Ascending aorta (tissue), 2 donors: ENCODE measurements at regions of chr9 and their contacts with region 1.

Region 1: GRCh38 chr9:94030318-94031179 is 53.7 kb upstream of the PTPDC1 start:
- DNase-seq: peak; percentile 37 to 92
- H3K4me3 ChIP-seq: peak overlapping the region; percentile 94 to 95
- H3K27ac ChIP-seq: peak overlapping the region; percentile 79 to 82
- H3K4me1 ChIP-seq: peaks cover 0 to 8% of the 10 kb centered on the region in 2 donors
- H3K27me3 ChIP-seq: no peaks in the 10 kb centered on the region
- CTCF ChIP-seq: no peak

Region 2: GRCh38 chr9:93874242-93874641 is 156.3 kb before region 1 on chr9:
- intact Hi-C with region 1: no loop called
- DNase-seq: no peak
- H3K4me3 ChIP-seq: no peak overlapping the region
- H3K27ac ChIP-seq: no peak overlapping the region
- H3K4me1 ChIP-seq: no peaks in the 10 kb centered on the region
- H3K27me3 ChIP-seq: no peaks in the 10 kb centered on the region
- CTCF ChIP-seq: no peak

Region 3: DNA sequence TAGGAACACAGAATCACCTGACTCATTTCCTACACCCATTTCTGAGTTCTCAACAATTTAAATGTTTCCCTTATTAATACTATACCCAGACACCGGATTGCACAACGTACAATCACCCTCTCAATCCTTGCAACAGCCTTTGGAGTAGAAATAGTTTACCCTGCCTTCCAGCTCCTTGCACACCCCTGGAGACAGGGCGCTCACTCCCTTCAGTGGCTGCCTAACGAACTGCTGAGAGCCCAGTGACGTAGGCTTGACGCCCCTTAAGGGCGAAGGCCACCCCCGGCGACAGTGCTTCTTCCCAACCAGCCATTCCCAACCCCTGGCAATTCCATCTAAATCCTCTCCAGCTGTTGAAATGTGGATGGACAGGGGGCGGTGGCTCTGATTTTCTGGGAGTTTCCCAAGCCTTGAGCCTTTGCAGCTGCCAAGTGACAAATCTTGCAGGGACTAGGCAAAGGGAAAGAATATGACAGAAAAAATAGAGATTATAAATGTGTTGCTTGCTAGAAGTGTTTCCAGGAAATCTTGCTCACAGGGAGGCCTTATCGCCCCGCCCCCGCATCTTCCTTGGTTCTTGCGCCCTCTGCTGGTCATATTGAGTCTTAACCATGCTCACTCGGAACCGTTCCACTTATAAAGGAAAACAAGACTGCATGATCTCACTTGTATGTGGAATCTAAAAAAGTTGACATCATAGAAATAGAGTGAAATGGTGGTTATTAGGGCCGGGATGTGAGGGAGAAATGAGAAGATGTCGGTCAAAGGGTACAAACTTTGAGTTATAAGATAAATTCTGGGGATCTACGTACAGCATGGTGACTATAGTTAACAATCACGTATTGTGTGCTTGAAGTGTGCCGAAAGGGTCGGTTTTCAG is 67.7 kb before region 1 on chr9:
- intact Hi-C with region 1: loop called (anchors 2 kb)
- DNase-seq: peak in 1 of 2 donors; percentile 92
- H3K4me3 ChIP-seq: peak overlapping the region in 1 of 2 donors; percentile 22
- H3K27ac ChIP-seq: no peak overlapping the region
- H3K4me1 ChIP-seq: peaks cover 4 to 16% of the 10 kb centered on the region in 2 donors
- H3K27me3 ChIP-seq: peaks cover 32% of the 10 kb centered on the region
- CTCF ChIP-seq: peak; percentile 67 to 83 (median 73)

Region 4: GRCh38 chr9:94056442-94056974 is 26.0 kb after region 1 on chr9:
- intact Hi-C with region 1: loop called (anchors 2 kb)
- DNase-seq: no peak
- H3K4me3 ChIP-seq: peak overlapping the region in 1 of 2 donors; percentile 7
- H3K27ac ChIP-seq: peak overlapping the region; percentile 59 to 61
- H3K4me1 ChIP-seq: peaks cover 0 to 6% of the 10 kb centered on the region in 2 donors
- H3K27me3 ChIP-seq: no peaks in the 10 kb centered on the region
- CTCF ChIP-seq: no peak

Region 5: GRCh38 chr9:94134629-94135028 is 104.1 kb after region 1 on chr9:
- intact Hi-C with region 1: loop called (anchors 5 kb)
- DNase-seq: no peak
- H3K4me3 ChIP-seq: no peak overlapping the region
- H3K27ac ChIP-seq: peak overlapping the region; percentile 95
- H3K4me1 ChIP-seq: peaks cover 11 to 55% of the 10 kb centered on the region in 2 donors
- H3K27me3 ChIP-seq: no peaks in the 10 kb centered on the region
- CTCF ChIP-seq: no peak

Region 6: GRCh38 chr9:94586814-94587213 is 556.3 kb after region 1 on chr9:
- intact Hi-C with region 1: no loop called
- DNase-seq: no peak
- H3K4me3 ChIP-seq: no peak overlapping the region
- H3K27ac ChIP-seq: no peak overlapping the region
- H3K4me1 ChIP-seq: no peaks in the 10 kb centered on the region
- H3K27me3 ChIP-seq: no peaks in the 10 kb centered on the region
- CTCF ChIP-seq: no peak